Activated T-helper 2 cell treated with anti-CD3 and anti-CD28 coated beads, Interferon-gamma antibody, Interleukin-2, Interleukin-4, amounts not matched to agents 10 μg/mL and 5 μg/mL and 100 μg/mL, durations not matched to agents 14 hours and 24 hours and 36 hours (primary cell): ENCODE measurements at regions of chr3 and their contacts with region 1.

Region 1: GRCh38 chr3:171459942-171460724 is at the start of gene TNIK:
- DNase-seq: peak; percentile 92
- H3K4me3 Mint-ChIP-seq: peak within 1 kb of the TSS; percentile 89
- H3K27ac Mint-ChIP-seq: peak within 1 kb of the TSS; percentile 87
- H3K4me1 Mint-ChIP-seq: peaks cover 43% of the 10 kb centered on the region
- H3K27me3 Mint-ChIP-seq: no peaks in the 10 kb centered on the region
- total RNA-seq, gene TNIK: 39.9 and 44.0 TPM in 2 replicates

Region 2: DNA sequence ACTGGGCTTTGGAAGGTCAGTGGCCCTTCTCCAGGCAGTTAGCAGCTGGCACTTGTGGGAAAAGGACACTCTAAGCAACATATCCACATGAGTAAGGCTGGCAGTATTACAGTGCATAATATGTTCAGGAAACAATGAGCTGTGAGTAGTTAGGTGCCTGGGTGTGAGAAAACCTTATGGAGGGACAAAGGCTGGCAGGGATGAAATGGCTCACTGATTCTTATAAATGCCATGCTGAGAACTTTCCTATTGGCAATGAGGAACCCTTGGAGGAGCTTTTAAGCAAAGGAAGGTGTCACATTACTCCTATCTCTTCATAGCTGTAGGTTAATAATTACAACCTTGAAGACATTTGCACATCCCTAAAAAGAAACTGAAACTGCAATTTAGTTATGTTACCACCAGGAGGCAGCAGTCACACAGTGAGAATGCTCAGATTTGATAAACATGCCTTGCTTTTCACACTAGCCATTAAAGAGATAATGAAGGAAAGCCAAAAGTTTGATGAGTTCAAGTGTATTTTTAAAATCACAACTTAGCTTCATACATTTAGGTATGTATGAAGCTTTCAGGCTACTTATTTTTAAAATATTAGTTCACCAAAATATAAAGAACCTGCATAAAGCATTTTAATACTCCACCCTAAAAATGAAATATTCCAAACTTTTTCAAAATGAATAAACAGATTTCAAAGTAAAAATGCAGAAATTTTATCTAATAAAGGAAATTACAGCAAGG is 297.0 kb before region 1 on chr3:
- intact Hi-C with region 1: loop called (anchors 2 kb)
- DNase-seq: no peak
- H3K4me3 Mint-ChIP-seq: no peak overlapping the region
- H3K27ac Mint-ChIP-seq: no peak overlapping the region
- H3K4me1 Mint-ChIP-seq: peaks cover 18% of the 10 kb centered on the region
- H3K27me3 Mint-ChIP-seq: no peaks in the 10 kb centered on the region

Region 3: GRCh38 chr3:171255236-171255806 is 204.8 kb before region 1 on chr3:
- intact Hi-C with region 1: loop called (anchors 1 kb)
- DNase-seq: no peak
- H3K4me3 Mint-ChIP-seq: peak overlapping the region; percentile 60
- H3K27ac Mint-ChIP-seq: peak overlapping the region; percentile 94
- H3K4me1 Mint-ChIP-seq: peaks cover 92% of the 10 kb centered on the region
- H3K27me3 Mint-ChIP-seq: no peaks in the 10 kb centered on the region

Region 4: DNA sequence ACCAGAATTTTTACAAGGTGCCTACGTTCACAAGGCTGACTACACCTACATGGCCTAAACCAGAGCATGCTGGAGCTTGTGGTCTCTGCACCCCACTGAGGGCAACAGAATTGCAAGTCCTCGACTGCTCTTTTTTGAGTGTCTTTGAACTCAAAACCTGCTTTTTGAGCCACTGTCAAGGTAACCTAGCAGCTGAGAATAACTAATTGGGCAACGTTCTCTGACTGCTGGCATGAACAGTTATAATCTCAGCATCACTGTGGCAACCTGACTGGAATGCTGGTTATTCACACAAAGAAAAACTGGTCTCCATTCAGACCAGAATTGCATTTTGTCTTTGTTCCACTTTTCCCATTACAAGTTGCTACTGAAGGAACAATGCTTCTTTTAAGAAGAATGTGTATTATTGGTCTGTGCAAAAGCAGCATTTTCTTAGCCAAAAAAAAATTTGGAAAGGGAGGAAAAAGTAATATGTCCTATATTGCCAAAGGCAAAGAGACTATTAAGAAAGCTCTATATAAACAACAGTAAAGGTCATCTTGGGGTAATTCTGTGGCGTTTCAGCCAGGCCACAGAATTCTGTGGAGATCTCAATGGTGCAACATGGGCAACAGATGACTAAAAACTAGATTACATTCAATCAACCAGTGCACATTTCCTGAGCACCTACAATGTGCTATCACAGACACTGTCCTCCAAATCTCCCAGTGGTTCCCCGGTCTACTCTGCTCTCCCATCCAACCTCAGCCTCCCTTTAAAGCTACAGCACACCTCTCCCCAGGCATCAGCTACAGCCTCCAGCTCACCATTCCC is 76.7 kb before region 1 on chr3:
- intact Hi-C with region 1: loop called (anchors 2 kb)
- DNase-seq: no peak
- H3K4me3 Mint-ChIP-seq: peak overlapping the region; percentile 22
- H3K27ac Mint-ChIP-seq: peak overlapping the region; percentile 10
- H3K4me1 Mint-ChIP-seq: peaks cover 54% of the 10 kb centered on the region
- H3K27me3 Mint-ChIP-seq: no peaks in the 10 kb centered on the region

Region 5: DNA sequence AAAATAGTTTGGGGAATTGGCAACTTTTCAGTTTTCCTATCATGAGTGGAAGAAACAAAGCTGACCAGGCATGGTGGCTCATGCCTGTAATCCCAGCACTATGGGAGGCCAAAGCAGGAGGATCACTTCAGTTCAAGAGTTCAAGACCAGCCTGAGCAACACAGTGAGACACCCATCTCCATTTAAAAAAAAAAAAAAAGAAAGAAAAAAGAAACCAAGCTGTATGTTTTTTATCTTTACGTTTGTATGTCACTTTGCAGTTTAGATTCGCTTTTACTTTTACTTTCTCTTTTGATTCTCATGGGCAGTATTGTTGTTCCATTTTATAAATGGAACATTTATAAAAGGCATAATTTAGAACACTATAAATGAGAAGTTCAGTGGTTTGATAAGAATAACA is 31.2 kb after region 1 on chr3:
- intact Hi-C with region 1: loop called (anchors 1 kb)
- DNase-seq: no peak
- H3K4me3 Mint-ChIP-seq: peak overlapping the region; percentile 66
- H3K27ac Mint-ChIP-seq: peak overlapping the region; percentile 82
- H3K4me1 Mint-ChIP-seq: peaks cover 46% of the 10 kb centered on the region
- H3K27me3 Mint-ChIP-seq: no peaks in the 10 kb centered on the region

Region 6: DNA sequence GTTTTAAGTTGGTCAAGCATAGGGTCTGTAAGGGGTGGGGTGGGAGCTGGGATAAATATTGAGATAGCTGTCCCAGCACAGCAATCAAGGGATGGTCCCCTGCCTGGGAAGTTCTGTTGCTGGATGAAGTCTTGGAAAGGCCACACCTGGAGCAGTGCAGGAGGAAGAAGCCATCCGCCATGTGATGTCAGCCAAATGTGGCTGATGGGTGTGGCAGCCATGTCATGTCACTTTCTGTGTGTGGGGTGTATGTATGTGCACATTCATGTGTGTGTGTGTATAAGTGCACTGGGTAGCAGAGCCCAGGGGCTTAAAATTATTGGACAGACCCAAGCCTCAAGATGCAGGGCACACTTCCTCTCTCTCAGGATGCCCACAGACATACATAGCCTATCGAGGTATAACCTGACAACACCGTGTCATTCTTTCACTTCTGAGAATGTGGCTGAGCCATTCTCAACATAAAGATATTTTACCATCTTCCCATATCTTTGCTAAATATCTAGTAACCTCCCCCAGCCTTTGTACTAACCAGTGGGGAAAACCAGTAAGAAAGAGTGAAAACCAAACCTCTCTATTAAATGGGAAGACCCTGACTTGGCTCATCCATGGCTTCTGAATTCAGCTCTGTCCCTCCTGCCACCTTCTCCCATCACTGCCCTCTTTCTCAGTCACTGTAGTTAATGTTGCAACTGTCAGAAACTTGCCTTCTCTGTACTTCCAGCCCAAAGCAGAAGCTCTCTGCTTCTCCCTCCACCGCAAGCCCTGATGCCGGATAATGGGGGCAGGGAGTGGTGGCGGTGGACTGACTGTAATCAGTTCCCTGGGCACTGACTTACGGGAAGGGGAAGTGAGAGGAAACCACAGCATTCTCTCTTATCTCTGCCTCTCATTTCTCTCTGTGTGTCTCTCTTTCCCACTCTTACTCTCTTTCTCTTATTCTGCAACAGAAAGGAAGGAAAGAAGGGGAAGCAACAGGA is 1051.9 kb after region 1 on chr3:
- intact Hi-C with region 1: loop called (anchors 1 kb)
- DNase-seq: peak; percentile 63
- H3K4me3 Mint-ChIP-seq: peak overlapping the region; percentile 43
- H3K27ac Mint-ChIP-seq: peak overlapping the region; percentile 90
- H3K4me1 Mint-ChIP-seq: peaks cover 75% of the 10 kb centered on the region
- H3K27me3 Mint-ChIP-seq: no peaks in the 10 kb centered on the region